ENCODE measurements at regions of chr2 and their contacts with region 1.

Region 1: DNA sequence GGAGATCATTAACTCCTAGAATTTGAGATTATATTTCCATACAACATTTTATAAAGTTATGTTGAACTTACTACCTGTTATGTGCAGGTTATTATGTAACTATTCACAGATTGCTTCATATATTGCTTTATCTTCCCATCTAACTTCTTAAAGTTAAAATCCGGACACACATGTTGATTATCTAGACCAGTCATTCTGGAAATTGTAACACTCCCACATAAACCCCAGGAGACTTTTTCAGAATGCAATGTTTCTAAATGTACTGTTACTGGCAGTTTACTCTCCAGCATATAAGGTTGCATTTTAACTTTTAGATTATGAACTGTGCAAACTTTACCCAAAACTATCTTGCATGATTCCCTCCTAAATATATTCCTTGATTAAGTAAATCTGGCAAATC is 70.5 kb upstream of the FAM117B start:
- DNase-seq: no peak
- ATAC-seq: no peak

Region 2: GRCh38 chr2:202602285-202602684 is 38.1 kb after region 1 on chr2:
- intact Hi-C with region 1: no loop called
- DNase-seq: no peak
- ATAC-seq: no peak

Region 3: DNA sequence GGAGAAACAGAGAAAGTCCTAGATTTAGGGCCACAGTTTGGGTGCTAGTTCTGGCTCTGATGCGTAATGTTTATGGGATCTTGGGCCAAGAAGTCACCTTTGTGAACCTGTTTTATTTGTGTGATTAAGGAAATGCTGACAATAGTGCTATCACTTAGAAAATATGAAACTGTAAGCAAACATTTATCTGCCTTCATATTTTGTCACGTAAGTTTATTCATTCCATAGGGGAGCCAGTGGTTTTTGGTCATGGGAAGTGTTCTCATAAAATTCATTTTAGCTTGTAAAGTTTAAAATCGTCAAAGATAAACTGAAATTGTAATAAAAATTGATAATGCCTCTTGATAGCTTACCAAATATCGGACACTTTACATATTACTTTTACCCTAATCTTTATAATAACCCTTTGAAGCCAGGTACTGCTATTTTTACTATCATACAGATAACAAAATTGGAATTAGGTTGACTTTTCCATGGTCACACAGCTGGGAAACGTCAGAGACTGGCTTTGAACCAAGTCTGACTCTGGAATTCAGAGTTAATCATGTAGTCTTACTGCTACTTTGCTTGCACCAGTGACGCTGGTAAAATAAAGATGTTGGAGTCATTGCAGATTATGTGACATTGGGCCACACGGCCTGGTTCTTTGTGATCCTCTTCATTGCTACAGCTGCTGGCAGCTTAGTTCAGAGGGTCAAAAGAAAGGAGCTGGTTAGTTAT is 207.7 kb after region 1 on chr2:
- intact Hi-C with region 1: loop called (anchors 5 kb)
- DNase-seq: no peak
- ATAC-seq: no peak

Measured in sciatic nerve (tissue), 2 donors.